ENCODE measurements at regions of chr2 and their contacts with region 1.

Region 1: GRCh38 chr2:11248-11941 is 34.9 kb downstream of the FAM110C start:
- DNase-seq: peak; percentile 88 to 98
- H3K4me3 ChIP-seq: no peak overlapping the region; a peak in 1 of 8 replicates
- H3K27ac ChIP-seq: no peak overlapping the region
- H3K4me1 ChIP-seq: no peaks in the 10 kb centered on the region
- H3K27me3 ChIP-seq: no peaks in the 10 kb centered on the region
- CTCF ChIP-seq: peak; percentile 94 to 100 (median 99)
- EP300 ChIP-seq: no peak
- POLR2A ChIP-seq: no peak
- RAD21 ChIP-seq: peak; percentile 78 to 85

Region 2: DNA sequence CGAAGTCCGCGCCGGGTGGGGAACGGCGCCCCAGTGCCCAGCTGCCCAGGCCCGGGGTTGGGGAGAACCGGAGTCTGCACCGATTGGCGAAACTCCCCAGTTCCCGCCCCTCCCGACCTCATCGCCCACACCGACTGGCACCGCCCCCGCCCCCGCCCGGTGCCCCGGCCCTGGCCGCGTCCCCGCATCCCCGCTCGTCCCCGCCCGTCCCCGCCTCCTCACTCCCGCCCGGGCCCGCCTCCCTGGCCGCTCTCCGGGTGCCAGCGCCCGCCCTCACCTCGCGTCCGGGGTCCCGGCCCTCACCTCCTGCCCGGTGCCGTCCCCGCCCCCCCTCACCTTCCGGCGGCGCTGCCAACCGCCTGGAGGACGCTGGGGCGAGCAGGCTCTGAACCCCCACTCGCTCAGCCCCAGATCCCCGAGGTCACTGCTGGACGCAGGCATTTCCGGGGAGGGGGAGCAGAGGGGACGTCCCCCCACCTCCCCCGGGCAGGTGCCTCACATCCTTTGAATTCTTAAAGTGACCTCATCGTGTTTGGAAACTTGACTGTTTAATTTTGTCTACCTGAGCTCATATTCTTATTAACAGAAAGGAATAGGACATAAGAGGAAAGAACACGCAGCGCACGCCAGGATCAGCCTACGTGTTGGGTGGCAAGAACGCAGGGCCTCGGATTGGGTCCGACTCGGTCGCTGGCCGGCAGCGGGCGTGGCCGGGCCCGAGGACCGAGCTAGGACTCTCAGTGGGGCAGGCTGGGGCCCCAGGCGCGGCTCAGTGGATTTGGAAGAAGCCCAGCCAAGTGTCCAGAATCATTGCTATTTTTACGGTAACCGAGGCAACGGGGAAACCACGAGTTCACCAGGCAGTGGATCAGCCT is 35.3 kb after region 1 on chr2 and contains the start of gene FAM110C:
- CTCF ChIA-PET with region 1: interaction called, 13 read pairs
- POLR2A ChIA-PET with region 1: no interaction called
- DNase-seq: peak in 1 of 2 experiments; percentile 83
- H3K4me3 ChIP-seq: peak within 1 kb of the TSS; percentile 66 to 82 (median 74)
- H3K27ac ChIP-seq: peak within 1 kb of the TSS; percentile 14; the same call in 1 of the 2 replicates
- H3K4me1 ChIP-seq: peaks cover 6 to 11% (median 11%) of the 10 kb centered on the region in 4 experiments; a peak in 6 of 7 replicates
- H3K27me3 ChIP-seq: peaks cover 0 to 12% (median 5%) of the 10 kb centered on the region in 4 experiments; a peak in 4 of 7 replicates
- CTCF ChIP-seq: no peak
- EP300 ChIP-seq: no peak
- POLR2A ChIP-seq: 0 out of 3 replicates have a peak, but pooled peaks of 1 of the 2 experiments have one; percentile 33
- RAD21 ChIP-seq: 0 out of 4 replicates have a peak, but pooled peaks of 1 of the 2 experiments have one; percentile 7
- total RNA-seq, gene FAM110C: 13.2 and 15.4 TPM in 2 replicates

Region 3: DNA sequence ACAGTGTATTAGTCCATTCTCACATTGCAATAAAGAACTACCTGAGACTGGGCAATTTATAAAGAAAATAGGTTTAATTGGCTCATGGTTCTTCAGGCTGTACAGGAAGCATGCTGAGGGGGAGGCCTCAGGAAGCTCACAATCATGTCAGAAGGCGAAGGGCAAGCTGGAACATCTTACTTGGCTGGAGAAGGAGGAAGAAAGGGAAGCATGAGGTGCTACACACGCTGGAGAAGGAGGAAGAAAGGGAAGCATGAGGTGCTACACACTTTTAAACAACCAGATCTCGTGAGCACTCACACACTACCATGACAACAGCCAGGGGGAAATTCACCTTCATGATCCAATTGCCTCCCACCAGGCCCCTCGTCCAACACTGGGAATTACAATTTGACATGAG is 130.2 kb after region 1 on chr2:
- CTCF ChIA-PET with region 1: interaction called, 108 read pairs
- POLR2A ChIA-PET with region 1: no interaction called
- DNase-seq: no peak
- H3K4me3 ChIP-seq: no peak overlapping the region
- H3K27ac ChIP-seq: no peak overlapping the region
- H3K4me1 ChIP-seq: peaks cover 0 to 7% (median 4%) of the 10 kb centered on the region in 4 experiments; a peak in 5 of 7 replicates
- H3K27me3 ChIP-seq: no peaks in the 10 kb centered on the region
- CTCF ChIP-seq: no peak
- EP300 ChIP-seq: no peak
- POLR2A ChIP-seq: no peak
- RAD21 ChIP-seq: no peak

Region 4: DNA sequence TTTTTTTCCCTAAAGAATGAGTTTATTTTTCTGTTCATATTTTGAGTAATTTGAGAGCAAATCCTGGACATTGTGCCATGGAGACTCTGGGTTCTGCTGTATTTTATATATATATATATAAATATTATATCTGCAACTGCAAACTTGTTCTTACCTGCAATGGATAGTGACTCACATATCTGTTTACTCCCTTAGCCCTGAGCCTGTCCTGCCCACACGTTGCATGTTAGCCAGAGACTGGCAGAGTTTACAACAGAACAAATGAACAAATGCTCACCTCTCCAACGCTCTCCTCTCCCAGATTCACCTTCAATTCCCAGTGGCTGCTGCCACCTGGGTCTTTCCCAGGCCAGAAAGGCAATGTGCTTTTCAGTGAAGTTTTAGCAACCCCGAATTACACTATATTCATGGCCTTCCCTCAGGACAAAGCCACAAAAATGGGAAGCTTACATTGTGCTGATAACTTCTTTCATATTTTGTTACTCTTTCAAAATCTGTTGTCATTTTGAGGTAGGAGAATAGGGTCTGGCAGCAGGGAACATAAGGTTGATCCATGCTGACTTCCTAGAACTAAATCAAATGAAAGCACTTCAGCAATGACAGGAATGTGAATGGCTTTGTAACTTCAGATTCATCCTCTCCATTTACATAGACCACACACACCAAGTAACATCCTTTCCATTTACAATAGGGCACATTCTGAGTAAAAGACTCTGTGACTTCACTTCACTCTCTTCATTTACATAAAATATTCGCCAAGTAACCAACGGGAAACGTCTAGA is 140.3 kb after region 1 on chr2:
- CTCF ChIA-PET with region 1: interaction called, 10 read pairs
- POLR2A ChIA-PET with region 1: no interaction called
- DNase-seq: no peak
- H3K4me3 ChIP-seq: peak overlapping the region in 1 of 4 experiments; percentile 40; a peak in 1 of 8 replicates
- H3K27ac ChIP-seq: peak overlapping the region; percentile 88
- H3K4me1 ChIP-seq: peaks cover 7 to 24% (median 18%) of the 10 kb centered on the region in 4 experiments
- H3K27me3 ChIP-seq: no peaks in the 10 kb centered on the region
- CTCF ChIP-seq: no peak
- EP300 ChIP-seq: peak in 1 of 2 experiments; percentile 70; a peak in 1 of 3 replicates
- POLR2A ChIP-seq: peak in 1 of 2 experiments; percentile 61; a peak in 1 of 3 replicates
- RAD21 ChIP-seq: no peak

Measured in H1 (cell line).